ENCODE measurements at regions of chr16 and their contacts with region 1.

Region 1: DNA sequence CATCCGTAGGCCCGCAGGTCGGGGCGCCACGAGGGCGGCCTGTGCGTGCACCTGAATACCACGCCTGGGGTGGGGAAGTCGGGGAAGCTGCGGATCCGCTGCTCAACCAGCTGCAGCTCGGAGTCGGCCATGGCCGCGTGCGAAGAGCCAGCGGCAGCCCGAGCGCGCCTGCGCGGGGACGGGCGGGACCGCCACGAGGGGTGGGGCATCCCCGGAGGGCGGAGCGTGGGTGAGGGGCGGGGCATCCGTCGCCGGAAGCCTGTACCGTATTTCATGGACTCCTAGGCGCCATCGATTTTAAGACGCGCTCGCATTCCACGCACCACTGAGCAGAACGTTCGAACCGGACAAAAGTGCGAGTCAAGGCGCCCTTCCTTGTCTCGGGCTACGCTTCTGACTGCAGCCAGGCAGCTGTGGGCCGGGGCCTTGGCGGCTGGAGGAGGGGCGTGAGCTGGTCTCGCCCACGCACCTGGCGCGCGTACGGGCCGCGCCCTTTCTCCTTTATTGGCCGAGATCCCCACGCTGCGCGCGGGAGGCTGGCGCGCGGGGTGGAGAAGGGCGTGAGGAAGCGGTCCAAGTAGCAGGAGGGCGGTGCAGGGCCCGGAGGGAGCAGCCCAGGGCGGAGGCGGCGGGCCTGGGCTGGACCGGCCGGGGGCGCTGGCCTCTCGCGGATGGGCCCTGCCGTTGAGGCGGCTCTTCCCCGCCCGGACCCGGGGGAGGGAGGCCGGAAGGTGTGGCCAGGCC is at the start of gene APRT:
- DNase-seq: peak; percentile 98
- CTCF ChIP-seq: peak; percentile 57

Region 2: GRCh38 chr16:88785106-88785924 is 26.6 kb before region 1 on chr16 and contains the start of gene PIEZO1:
- CTCF ChIA-PET with region 1: interaction called, 10 read pairs
- POLR2A ChIA-PET with region 1: interaction called, 3 read pairs
- DNase-seq: peak; percentile 86
- CTCF ChIP-seq: peak; percentile 97

Region 3: GRCh38 chr16:88799569-88800276 is 12.2 kb before region 1 on chr16:
- CTCF ChIA-PET with region 1: interaction called, 22 read pairs
- POLR2A ChIA-PET with region 1: no interaction called
- DNase-seq: no peak
- CTCF ChIP-seq: no peak

Region 4: DNA sequence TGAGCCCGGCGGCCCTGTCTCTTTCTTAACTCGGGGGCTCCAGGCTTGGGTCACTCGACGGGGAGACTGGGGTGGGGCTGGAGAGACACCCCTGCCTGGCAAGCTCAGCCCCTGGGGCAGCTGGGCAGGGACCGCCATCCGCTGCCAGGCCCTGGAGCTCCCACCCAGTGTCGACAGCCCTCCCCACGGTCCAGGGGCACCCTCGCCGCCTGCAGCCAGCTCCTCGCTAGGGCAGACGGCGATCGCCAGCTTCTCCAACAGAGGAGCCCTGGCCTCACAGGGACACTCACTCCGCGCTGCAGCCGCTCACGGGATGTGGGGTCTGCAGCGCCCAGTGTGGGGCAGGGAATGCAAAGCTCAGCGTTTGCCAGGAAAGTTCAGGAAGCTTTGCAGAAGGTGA is 15.8 kb after region 1 on chr16:
- CTCF ChIA-PET with region 1: no interaction called
- POLR2A ChIA-PET with region 1: no interaction called
- DNase-seq: no peak
- CTCF ChIP-seq: no peak

Region 5: GRCh38 chr16:88856828-88857733 is 45.1 kb after region 1 on chr16 and contains the starts of genes GALNS and TRAPPC2L:
- CTCF ChIA-PET with region 1: interaction called, 37 read pairs
- POLR2A ChIA-PET with region 1: interaction called, 3 read pairs
- DNase-seq: peak; percentile 100
- CTCF ChIP-seq: peak; percentile 2

Region 6: DNA sequence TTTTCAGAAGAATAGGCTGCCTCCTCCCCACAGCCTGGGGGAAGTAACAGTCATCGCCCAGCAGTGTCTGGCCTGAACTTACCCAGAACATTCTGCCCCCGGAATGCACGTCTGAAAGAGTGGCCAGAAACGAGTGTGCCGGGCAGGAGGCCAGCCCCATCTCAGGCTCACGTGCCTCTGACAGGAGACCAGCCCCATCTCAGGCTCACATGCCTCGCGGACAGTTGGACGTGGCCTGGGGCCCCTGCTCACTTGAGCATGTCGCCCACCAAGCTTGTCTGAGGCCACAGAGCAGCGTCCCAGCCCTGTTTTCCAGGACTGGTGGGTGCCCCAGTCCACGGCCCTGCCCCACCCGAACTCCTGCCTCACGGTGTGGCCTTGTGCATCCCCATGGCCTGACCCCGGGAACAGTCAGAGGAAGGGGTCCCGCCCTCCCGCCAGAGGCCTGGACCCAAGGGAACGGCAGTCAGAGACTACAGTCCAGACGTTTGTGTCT is 343.3 kb after region 1 on chr16:
- CTCF ChIA-PET with region 1: no interaction called
- POLR2A ChIA-PET with region 1: no interaction called
- DNase-seq: no peak
- CTCF ChIP-seq: no peak

Region 7: DNA sequence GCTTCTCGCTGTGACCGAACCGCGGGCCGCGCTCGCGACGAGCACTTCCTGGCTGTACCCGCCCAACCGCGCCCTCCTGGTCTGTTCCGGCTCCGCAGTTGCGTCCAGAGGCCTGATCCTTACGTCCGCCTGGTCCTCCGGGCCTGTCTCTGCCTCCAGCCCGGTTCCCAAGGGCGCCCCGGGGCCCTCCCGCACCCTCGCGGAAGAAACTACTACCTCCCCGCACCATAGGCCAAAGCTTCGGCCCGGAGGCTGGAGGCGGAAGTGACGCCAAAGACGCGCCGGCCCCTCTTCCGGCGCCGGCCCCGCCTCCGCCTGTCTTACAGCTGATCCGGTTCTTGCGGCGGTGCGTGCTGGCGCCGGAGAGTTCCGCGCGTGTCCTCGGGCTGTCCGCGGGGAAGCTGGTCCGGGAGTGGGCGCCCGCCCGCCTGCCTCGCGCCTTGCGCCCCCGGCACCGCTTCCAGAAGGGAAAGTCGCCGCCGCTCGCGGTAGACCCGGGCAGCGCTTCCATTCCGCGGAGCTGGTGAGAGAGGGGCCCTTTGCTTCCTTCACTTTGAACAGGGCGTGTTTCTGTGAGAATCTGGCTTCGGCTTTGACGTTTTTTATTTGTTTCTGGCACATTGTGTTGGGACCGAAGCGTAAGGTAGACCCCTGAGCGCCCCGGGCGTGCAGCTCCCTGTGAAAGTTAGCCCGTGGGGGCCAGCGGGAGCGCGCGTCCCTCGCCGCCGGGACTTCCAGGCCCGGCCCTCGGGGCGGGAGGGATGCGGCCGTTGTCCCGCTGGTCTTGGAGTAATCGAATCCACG is 405.6 kb after region 1 on chr16 and contains the start of gene ZNF778:
- CTCF ChIA-PET with region 1: interaction called, 10 read pairs
- POLR2A ChIA-PET with region 1: no interaction called
- DNase-seq: peak; percentile 94
- CTCF ChIP-seq: no peak